ENCODE measurements at regions of chr1 and their contacts with region 1.

Region 1: DNA sequence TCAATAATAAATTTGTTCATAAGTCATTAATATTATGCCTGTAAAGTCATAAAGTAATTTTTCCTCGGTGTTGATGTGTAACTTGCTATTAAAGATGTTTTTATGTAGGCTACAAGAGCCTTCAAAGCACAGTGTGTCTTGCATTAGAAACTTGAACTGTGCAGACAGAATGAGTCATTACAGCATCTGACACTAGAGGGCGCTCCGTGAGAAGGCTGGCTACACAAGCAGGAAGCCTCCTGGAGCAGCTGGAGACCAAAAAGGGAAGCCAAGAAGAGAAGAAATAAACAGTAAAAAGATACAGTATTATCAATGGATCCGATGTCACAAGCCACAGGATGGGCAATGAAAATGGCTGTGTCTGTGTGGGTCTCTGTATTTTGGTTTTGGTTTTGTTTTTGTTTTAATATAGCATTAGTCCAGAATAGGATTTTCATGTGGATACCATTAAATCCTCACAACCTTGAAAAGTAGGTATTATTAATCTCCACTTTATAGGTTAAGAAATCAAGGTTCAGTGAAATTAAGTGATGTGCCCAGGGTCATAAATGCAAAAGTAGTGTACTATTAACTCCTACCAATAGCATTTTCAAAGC is 16.1 kb upstream of the LRRC8D start:
- DNase-seq: peak; percentile 91
- ATAC-seq: peak; percentile 91
- H3K4me3 Mint-ChIP-seq: no peak overlapping the region
- H3K27ac Mint-ChIP-seq: no peak overlapping the region
- H3K4me1 Mint-ChIP-seq: peaks cover 9% of the 10 kb centered on the region
- H3K27me3 Mint-ChIP-seq: peaks cover 4% of the 10 kb centered on the region

Region 2: DNA sequence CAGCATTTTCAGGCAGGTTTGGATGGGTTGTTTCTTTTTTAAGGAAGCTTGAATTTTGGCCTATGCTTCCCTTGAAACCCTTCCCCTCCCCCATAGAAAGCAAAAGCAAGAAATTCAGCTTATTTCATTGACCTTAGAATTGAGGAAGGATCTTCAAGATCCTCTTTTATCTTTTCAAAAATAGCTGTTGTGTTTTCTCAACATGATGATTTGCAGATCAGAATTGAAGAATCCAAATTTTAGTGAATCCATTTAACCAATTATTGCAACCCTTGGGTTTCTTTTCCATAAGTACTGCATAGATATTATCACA is 98.1 kb before region 1 on chr1:
- CTCF ChIA-PET with region 1: no interaction called
- DNase-seq: no peak
- ATAC-seq: no peak
- H3K4me3 Mint-ChIP-seq: no peak overlapping the region
- H3K27ac Mint-ChIP-seq: peak overlapping the region; percentile 36
- H3K4me1 Mint-ChIP-seq: peaks cover 44% of the 10 kb centered on the region
- H3K27me3 Mint-ChIP-seq: no peaks in the 10 kb centered on the region

Region 3: GRCh38 chr1:89743788-89744187 is 61.0 kb before region 1 on chr1:
- CTCF ChIA-PET with region 1: no interaction called
- DNase-seq: no peak
- ATAC-seq: no peak
- H3K4me3 Mint-ChIP-seq: no peak overlapping the region
- H3K27ac Mint-ChIP-seq: no peak overlapping the region
- H3K4me1 Mint-ChIP-seq: peaks cover 46% of the 10 kb centered on the region
- H3K27me3 Mint-ChIP-seq: no peaks in the 10 kb centered on the region

Region 4: GRCh38 chr1:89780721-89781120 is 24.0 kb before region 1 on chr1:
- CTCF ChIA-PET with region 1: interaction called, 12 read pairs
- DNase-seq: no peak
- ATAC-seq: peak; percentile 65
- H3K4me3 Mint-ChIP-seq: no peak overlapping the region
- H3K27ac Mint-ChIP-seq: no peak overlapping the region
- H3K4me1 Mint-ChIP-seq: peaks cover 20% of the 10 kb centered on the region
- H3K27me3 Mint-ChIP-seq: no peaks in the 10 kb centered on the region

Region 5: GRCh38 chr1:89820422-89821321 is 15.9 kb after region 1 on chr1 and contains the start of gene LRRC8D:
- CTCF ChIA-PET with region 1: interaction called, 11 read pairs
- DNase-seq: peak; percentile 78
- ATAC-seq: peak; percentile 83
- H3K4me3 Mint-ChIP-seq: peak within 1 kb of the TSS; percentile 76
- H3K27ac Mint-ChIP-seq: peak within 1 kb of the TSS; percentile 55
- H3K4me1 Mint-ChIP-seq: peaks cover 23% of the 10 kb centered on the region
- H3K27me3 Mint-ChIP-seq: peaks cover 8% of the 10 kb centered on the region
- total RNA-seq, gene LRRC8D: 19.2 to 27.7 TPM

Region 6: GRCh38 chr1:89987170-89987819 is 182.6 kb after region 1 on chr1:
- CTCF ChIA-PET with region 1: interaction called, 10 read pairs
- DNase-seq: peak; percentile 70
- ATAC-seq: peak; percentile 74
- H3K4me3 Mint-ChIP-seq: no peak overlapping the region
- H3K27ac Mint-ChIP-seq: no peak overlapping the region
- H3K4me1 Mint-ChIP-seq: peaks cover 1% of the 10 kb centered on the region
- H3K27me3 Mint-ChIP-seq: peaks cover 27% of the 10 kb centered on the region

Region 7: DNA sequence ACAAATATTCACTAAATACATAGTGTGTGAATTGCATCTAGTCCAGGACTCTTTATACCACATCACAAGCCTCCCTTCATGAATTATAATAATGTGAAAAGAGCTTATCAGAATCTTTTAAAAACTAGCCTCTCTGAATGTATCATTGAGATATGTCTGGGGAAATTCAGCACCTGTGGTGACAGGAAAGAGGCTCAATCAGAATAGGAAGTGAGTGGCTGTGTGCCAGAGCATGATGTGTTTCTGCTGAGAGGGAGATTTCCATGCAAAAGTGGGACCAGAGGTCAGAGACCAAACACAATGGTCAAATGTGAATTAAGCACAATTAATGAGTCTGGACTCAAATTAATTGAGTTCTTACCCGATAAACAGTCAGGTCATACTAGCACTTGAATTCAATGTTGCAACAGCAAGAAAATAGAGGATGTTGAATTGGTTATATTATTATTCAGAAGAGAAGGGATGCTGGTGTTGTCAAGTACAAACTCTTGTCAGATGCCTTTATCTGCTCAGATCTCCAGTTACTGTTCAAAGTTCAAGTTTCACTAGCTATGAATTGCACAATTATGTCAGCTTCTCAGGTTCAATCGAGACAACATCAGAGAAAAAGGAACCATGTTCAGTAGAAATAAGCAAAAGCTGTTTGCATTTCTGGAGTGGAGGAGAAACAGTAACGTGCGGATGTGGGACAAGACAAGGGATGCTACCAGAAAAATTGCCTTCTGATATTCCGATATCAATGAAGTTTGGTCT is 416.4 kb after region 1 on chr1:
- CTCF ChIA-PET with region 1: no interaction called
- DNase-seq: no peak
- ATAC-seq: no peak
- H3K4me3 Mint-ChIP-seq: no peak overlapping the region
- H3K27ac Mint-ChIP-seq: no peak overlapping the region
- H3K4me1 Mint-ChIP-seq: no peaks in the 10 kb centered on the region
- H3K27me3 Mint-ChIP-seq: no peaks in the 10 kb centered on the region

Measured in activated CD8-positive, alpha-beta memory T cell treated with anti-CD3 and anti-CD28 coated beads, Interleukin-2, amount 10 ng/mL, durations not matched to agents 7 days and 5 days (primary cell).